CD4-positive, alpha-beta memory T cell (primary cell): ENCODE measurements at regions of chr2 and their contacts with region 1.

Region 1: GRCh38 chr2:37832590-37833197 is 92.4 kb upstream of the RMDN2 start:
- DNase-seq: peak; percentile 69 to 75 (median 74)
- H3K4me3 ChIP-seq: no peak overlapping the region
- H3K4me3 Mint-ChIP-seq: no peak overlapping the region
- H3K27ac ChIP-seq: no peak overlapping the region
- H3K27ac Mint-ChIP-seq: peak overlapping the region in 2 of 7 donors; percentile 16 to 48
- H3K4me1 ChIP-seq: peaks cover 16% of the 10 kb centered on the region
- H3K4me1 Mint-ChIP-seq: peaks cover 5 to 26% (median 11%) of the 10 kb centered on the region in 4 donors
- H3K27me3 ChIP-seq: no peaks in the 10 kb centered on the region
- H3K27me3 Mint-ChIP-seq: no peaks in the 10 kb centered on the region

Region 2: DNA sequence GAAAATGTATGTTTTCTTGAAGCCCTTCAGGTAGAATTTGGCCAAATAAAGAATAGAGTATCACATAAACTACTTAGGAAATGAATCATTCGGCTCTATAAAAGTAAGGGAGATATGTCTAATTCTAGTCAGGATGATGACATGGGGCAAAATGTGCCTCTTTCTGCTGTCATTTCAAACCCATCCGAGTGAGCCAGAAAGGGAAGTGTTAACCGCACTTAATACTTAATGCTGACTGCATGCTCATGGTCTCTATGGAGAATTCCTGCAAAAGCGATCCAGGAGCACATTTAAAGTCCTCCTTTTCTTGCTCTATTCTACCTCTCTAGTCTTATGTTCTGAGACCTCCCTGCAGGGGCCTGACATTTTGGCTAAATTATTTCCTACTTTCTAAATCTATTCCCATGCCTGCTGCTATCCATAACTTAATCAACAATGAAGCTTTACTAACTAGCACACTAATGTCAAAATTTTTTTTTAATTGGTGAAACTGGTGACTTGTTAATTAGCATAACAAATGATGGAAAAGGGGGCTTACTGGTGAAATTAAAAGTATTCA is 288.6 kb before region 1 on chr2:
- CTCF ChIA-PET with region 1: interaction called, 24 read pairs
- POLR2A ChIA-PET with region 1: interaction called, 3 read pairs
- intact Hi-C with region 1: loop called (anchors 1 kb)
- DNase-seq: no peak
- H3K4me3 ChIP-seq: no peak overlapping the region
- H3K4me3 Mint-ChIP-seq: no peak overlapping the region
- H3K27ac ChIP-seq: no peak overlapping the region
- H3K27ac Mint-ChIP-seq: no peak overlapping the region
- H3K4me1 ChIP-seq: no peaks in the 10 kb centered on the region
- H3K4me1 Mint-ChIP-seq: peaks cover 0 to 10% (median under 1%) of the 10 kb centered on the region in 4 donors
- H3K27me3 ChIP-seq: no peaks in the 10 kb centered on the region
- H3K27me3 Mint-ChIP-seq: no peaks in the 10 kb centered on the region

Region 3: DNA sequence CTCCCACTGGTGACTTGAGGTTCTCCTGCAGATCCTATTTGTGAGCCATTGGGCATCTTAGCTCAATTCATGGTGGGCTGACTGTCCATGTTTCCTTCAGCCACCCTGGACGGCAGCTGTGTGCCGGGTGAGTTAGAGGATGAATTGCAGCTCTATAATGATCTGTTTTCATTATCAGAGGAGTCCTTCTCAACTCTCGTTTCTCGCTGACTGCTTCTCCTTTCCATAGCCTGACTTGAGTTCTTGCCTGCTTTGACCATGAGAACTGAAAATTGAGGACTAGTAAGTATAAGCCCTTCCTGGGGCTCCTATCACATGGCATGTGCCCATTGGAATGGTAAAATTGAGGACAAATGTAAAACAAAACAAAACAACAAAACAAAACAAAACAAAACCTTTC is 283.1 kb before region 1 on chr2:
- CTCF ChIA-PET with region 1: interaction called, 24 read pairs
- POLR2A ChIA-PET with region 1: no interaction called
- intact Hi-C with region 1: loop called (anchors 1 kb)
- DNase-seq: no peak
- H3K4me3 ChIP-seq: no peak overlapping the region
- H3K4me3 Mint-ChIP-seq: no peak overlapping the region
- H3K27ac ChIP-seq: no peak overlapping the region
- H3K27ac Mint-ChIP-seq: no peak overlapping the region
- H3K4me1 ChIP-seq: peaks cover 12% of the 10 kb centered on the region
- H3K4me1 Mint-ChIP-seq: peaks cover 13 to 26% (median 16%) of the 10 kb centered on the region in 4 donors
- H3K27me3 ChIP-seq: no peaks in the 10 kb centered on the region
- H3K27me3 Mint-ChIP-seq: no peaks in the 10 kb centered on the region

Region 4: DNA sequence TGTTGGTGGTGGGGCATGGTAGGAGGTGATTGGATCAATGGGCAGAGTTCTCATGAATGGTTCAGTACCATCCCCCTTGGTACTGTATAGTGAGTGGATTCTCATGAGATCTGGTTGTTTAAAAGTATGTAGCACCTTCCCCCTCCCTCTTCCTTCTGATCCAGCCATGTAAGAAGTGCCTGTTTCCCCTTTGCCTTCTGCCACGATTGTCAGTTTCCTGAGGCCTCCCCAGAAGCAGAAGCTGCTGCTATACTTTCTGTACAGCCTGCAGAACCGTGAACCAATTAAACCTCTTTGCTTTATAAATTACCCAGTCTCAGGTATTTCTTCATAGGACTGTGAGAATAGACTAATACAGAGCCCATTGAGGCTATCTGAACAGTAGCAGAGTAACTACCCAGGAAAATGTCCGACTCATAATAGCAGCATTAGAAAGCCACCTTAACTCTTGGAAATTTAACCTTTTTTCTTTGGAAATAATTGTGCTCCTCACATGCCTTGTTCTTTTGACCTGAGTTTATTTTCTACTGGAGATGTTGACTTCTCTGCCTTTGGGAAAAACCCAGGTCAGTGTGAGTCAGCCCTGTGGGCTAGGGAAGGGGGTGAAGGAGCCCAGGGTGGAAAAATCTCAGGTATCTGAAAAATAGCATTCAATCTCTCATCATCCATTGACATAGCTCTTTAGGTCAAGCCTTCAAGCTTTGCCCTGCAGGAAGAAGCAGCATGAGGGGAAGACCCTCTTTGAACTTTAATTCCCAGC is 225.1 kb after region 1 on chr2:
- CTCF ChIA-PET with region 1: no interaction called
- POLR2A ChIA-PET with region 1: no interaction called
- intact Hi-C with region 1: no loop called
- DNase-seq: no peak
- H3K4me3 ChIP-seq: no peak overlapping the region
- H3K4me3 Mint-ChIP-seq: no peak overlapping the region
- H3K27ac ChIP-seq: no peak overlapping the region
- H3K27ac Mint-ChIP-seq: no peak overlapping the region
- H3K4me1 ChIP-seq: no peaks in the 10 kb centered on the region
- H3K4me1 Mint-ChIP-seq: no peaks in the 10 kb centered on the region
- H3K27me3 ChIP-seq: no peaks in the 10 kb centered on the region
- H3K27me3 Mint-ChIP-seq: peaks cover 9 to 23% of the 10 kb centered on the region in 2 donors